GM23248 (cell line): ENCODE measurements at regions of chr10 and their contacts with region 1.

Region 1: DNA sequence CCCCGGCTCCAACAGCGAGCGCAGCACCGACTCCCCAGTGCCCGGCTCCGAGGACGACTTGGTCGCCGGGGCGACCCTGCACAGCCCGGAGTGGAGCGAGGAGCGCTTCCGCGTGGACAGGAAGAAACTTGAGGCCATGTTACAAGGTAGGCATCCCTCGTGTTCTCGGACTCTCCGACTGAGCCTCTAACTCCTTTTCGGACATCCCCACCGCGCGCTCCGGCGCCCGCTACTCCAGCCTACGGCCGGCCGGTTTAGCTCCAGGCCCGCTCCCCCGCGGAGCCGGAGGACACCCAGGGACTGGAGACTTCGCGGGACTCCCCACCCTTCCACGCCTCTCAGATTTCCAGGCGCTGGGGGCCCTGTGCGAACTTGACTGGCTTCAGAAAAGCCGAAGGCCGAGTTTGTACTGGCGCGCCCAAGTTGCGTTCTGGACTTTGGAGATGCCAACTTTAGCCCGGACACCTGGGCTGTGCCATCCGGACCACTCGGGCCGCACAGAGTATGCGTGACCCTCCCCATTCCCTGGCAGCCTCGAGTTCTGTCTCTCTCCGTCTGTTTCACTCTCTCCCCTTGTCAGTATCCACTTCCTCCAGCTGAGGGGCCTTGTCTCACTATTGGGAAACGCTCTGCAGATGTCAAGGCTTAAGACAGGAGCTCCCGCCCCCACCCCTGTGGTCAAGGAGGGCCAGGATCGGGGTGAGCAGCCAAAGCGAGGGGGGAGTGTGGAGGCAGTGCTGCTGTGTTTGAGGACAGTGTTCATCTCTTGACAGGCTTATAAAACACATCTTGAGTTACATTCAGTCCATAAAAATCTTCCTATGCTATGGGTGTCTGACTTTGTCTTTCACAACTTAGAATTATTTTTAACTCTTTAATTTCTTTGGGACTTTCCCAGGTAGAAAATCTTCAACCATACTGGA is 777 bp downstream of the BICC1 start:
- DNase-seq: peak; percentile 70
- H3K4me3 ChIP-seq: peak overlapping the region; percentile 84
- H3K27ac ChIP-seq: peak overlapping the region; percentile 81
- H3K4me1 ChIP-seq: peaks cover 51% of the 10 kb centered on the region
- H3K27me3 ChIP-seq: no peaks in the 10 kb centered on the region

Region 2: DNA sequence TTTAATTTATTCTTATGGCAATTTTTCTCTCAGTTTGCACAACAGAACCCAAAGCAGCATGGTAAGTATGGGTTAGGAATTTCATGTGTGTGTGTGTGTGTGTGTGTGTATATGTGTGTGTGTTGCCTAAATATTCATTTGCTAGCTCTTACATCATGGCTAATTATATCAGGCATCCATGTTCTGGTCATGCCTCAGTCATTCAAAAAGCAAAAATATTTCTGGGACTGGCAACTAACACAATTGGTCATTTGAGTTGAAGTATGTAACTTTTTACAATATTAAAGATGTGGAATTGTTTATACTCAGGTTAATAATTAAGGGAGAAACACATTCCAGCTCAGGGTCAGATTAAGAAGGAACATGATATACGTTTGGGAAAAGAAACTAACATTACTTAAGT is 595.4 kb after region 1 on chr10:
- in situ Hi-C with region 1: no loop called
- DNase-seq: no peak
- H3K4me3 ChIP-seq: no peak overlapping the region
- H3K27ac ChIP-seq: no peak overlapping the region
- H3K4me1 ChIP-seq: no peaks in the 10 kb centered on the region
- H3K27me3 ChIP-seq: peaks cover 5% of the 10 kb centered on the region

Region 3: DNA sequence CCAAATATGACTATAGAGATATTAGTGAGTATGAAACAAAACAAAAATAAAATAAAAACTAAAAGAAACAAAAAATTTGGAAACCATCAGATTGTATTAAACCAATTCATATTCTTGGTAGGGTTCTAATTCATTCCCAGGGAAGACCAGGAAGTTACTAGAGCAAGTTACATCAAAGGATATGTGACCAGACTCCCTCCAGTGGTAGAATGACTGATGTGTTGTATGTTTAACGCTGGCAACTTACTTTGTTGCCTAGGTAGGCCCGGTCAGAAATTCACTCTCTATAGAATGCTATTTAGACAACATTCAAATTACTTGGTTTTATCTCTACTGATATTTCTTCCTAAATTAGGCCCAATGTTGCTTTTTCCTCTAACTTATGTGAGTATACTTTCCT is 668.2 kb after region 1 on chr10:
- in situ Hi-C with region 1: loop called (anchors 25 kb)
- DNase-seq: peak; percentile 67
- H3K4me3 ChIP-seq: no peak overlapping the region
- H3K27ac ChIP-seq: no peak overlapping the region
- H3K4me1 ChIP-seq: no peaks in the 10 kb centered on the region
- H3K27me3 ChIP-seq: no peaks in the 10 kb centered on the region; the same call in 1 of the 2 replicates